Activated CD4-positive, alpha-beta T cell treated with anti-CD3 and anti-CD28 coated beads for 36 hours (primary cell): ENCODE measurements at regions of chr14 and their contacts with region 1.

Region 1: GRCh38 chr14:23539248-23540140 is 12.1 kb downstream of the ZFHX2 start:
- DNase-seq: peak; percentile 35
- ATAC-seq: peak; percentile 81
- H3K4me3 Mint-ChIP-seq: no peak overlapping the region
- H3K27ac Mint-ChIP-seq: no peak overlapping the region
- H3K4me1 Mint-ChIP-seq: no peaks in the 10 kb centered on the region
- H3K27me3 Mint-ChIP-seq: no peaks in the 10 kb centered on the region

Region 2: GRCh38 chr14:23478111-23478759 is 61.3 kb before region 1 on chr14:
- CTCF ChIA-PET with region 1: interaction called, 20 read pairs
- POLR2A ChIA-PET with region 1: interaction called, 8 read pairs
- intact Hi-C with region 1: loop called (anchors 1 to 2 kb)
- DNase-seq: peak; percentile 79
- ATAC-seq: peak; percentile 63
- H3K4me3 Mint-ChIP-seq: no peak overlapping the region
- H3K27ac Mint-ChIP-seq: no peak overlapping the region
- H3K4me1 Mint-ChIP-seq: peaks cover 11% of the 10 kb centered on the region
- H3K27me3 Mint-ChIP-seq: no peaks in the 10 kb centered on the region